AG04450 (cell line): ENCODE measurements at regions of chr12 and their contacts with region 1.

Region 1: GRCh38 chr12:43516045-43516444 is 36.0 kb downstream of the ADAMTS20 start:
- DNase-seq: no peak
- H3K4me3 ChIP-seq: no peak overlapping the region
- H3K27ac ChIP-seq: no peak overlapping the region
- H3K27me3 ChIP-seq: no peaks in the 10 kb centered on the region
- CTCF ChIP-seq: no peak

Region 2: GRCh38 chr12:42552822-42553221 is 963.2 kb before region 1 on chr12:
- CTCF ChIA-PET with region 1: no interaction called
- POLR2A ChIA-PET with region 1: interaction called, 11 read pairs
- DNase-seq: no peak
- H3K4me3 ChIP-seq: no peak overlapping the region
- H3K27ac ChIP-seq: no peak overlapping the region
- H3K27me3 ChIP-seq: no peaks in the 10 kb centered on the region
- CTCF ChIP-seq: no peak

Region 3: DNA sequence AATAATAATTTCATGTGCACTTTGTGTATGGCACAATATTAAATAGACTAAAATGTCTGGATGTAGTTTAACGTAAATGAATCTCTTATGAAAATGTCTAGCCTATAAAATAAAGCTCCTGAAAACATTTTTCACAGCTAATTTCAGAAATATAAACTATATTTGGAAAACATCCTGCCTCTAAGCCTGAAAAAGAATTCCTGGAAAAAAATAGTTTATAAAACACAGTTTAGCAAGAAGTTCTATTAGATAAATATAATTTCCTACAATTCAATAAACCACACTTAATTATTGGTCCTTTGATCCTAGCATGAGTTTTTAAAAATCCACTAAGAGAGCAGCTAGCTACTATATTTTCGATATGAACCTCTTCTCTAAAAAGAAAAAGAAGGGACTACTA is 123.9 kb before region 1 on chr12:
- CTCF ChIA-PET with region 1: no interaction called
- POLR2A ChIA-PET with region 1: no interaction called
- DNase-seq: no peak
- H3K4me3 ChIP-seq: no peak overlapping the region
- H3K27ac ChIP-seq: no peak overlapping the region
- H3K27me3 ChIP-seq: peaks cover 4% of the 10 kb centered on the region
- CTCF ChIP-seq: no peak